Esophagus muscularis mucosa (tissue), 4 donors: ENCODE measurements at regions of chr16 and their contacts with region 1.

Region 1: GRCh38 chr16:24689145-24689544 is 40.3 kb upstream of the TNRC6A start:
- DNase-seq: no peak
- H3K4me3 ChIP-seq: no peak overlapping the region
- H3K27ac ChIP-seq: no peak overlapping the region
- H3K4me1 ChIP-seq: peaks cover 5 to 23% (median 16%) of the 10 kb centered on the region in 4 donors
- H3K27me3 ChIP-seq: no peaks in the 10 kb centered on the region
- CTCF ChIP-seq: peak; percentile 34 to 52 (median 42)
- EP300 ChIP-seq: no peak
- POLR2A ChIP-seq: no peak

Region 2: GRCh38 chr16:24504472-24505345 is 184.4 kb before region 1 on chr16:
- intact Hi-C with region 1: no loop called
- DNase-seq: no peak
- H3K4me3 ChIP-seq: no peak overlapping the region
- H3K27ac ChIP-seq: no peak overlapping the region
- H3K4me1 ChIP-seq: no peaks in the 10 kb centered on the region
- H3K27me3 ChIP-seq: peaks cover 0 to 17% (median 0%) of the 10 kb centered on the region in 4 donors
- CTCF ChIP-seq: peak; percentile 62 to 76 (median 68)
- EP300 ChIP-seq: no peak
- POLR2A ChIP-seq: no peak

Region 3: DNA sequence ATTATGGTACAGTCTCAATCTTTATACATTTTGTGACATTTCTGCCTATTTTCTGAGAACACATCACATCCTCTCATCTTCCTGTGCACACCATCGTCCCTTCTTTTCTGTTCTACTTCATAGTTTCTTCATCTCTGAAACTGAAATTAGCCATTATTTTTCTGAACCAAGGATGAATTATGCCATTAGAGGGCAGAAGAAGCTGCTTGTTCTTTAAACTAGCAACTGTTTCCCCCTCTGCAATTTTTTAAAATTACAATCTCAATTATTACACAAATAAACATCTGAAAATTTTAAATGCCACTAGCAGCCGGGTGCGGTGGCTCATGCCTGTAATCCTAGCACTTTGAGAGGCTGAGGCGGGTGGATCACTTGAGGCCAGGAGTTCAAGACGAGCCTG is 108.5 kb before region 1 on chr16:
- intact Hi-C with region 1: loop called (anchors 10 kb)
- DNase-seq: no peak
- H3K4me3 ChIP-seq: no peak overlapping the region
- H3K27ac ChIP-seq: no peak overlapping the region
- H3K4me1 ChIP-seq: peaks cover 0 to 10% (median 2%) of the 10 kb centered on the region in 4 donors
- H3K27me3 ChIP-seq: no peaks in the 10 kb centered on the region
- CTCF ChIP-seq: peak; percentile 42 to 54 (median 49)
- EP300 ChIP-seq: no peak
- POLR2A ChIP-seq: no peak

Region 4: DNA sequence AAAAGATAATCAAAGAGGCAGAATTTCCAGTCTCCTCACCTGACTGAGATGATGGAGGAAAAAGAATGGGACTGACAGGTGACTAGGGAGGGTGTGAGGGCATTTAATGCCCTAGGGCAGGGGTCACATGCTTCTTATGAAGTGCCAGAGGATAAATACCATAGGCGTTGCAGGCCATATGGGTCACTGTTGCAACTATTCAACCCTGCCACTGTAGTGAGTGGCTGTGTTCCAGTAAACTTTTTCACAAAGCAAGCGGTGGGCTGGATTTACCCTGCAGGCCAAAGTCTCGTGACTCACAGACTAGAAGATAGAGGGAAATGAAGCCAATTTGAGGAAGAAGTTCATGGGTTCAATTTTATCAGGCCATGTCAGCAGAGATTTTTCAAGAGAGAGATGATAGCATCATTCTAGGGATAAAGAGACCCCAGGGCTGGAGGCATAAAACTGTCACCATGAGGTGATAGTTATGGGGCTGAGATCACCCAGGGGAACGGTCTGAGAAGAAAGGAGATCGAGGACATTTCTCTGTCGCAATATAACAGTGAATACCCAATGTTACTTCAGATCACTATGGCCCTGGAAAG is 317.4 kb after region 1 on chr16:
- intact Hi-C with region 1: no loop called
- DNase-seq: no peak
- H3K4me3 ChIP-seq: no peak overlapping the region
- H3K27ac ChIP-seq: peak overlapping the region in 2 of 4 donors; percentile 7 to 53
- H3K4me1 ChIP-seq: peaks cover 47 to 80% (median 70%) of the 10 kb centered on the region in 4 donors
- H3K27me3 ChIP-seq: no peaks in the 10 kb centered on the region
- CTCF ChIP-seq: no peak
- EP300 ChIP-seq: no peak
- POLR2A ChIP-seq: no peak